ENCODE measurements at regions of chr10 and their contacts with region 1.

Region 1: GRCh38 chr10:27439101-27439500 is 65.0 kb upstream of the RAB18 start:
- DNase-seq: no peak
- ATAC-seq: no peak
- H3K4me3 ChIP-seq: no peak overlapping the region
- H3K27ac ChIP-seq: no peak overlapping the region
- H3K4me1 ChIP-seq: no peaks in the 10 kb centered on the region
- H3K27me3 ChIP-seq: no peaks in the 10 kb centered on the region
- CTCF ChIP-seq: no peak

Region 2: DNA sequence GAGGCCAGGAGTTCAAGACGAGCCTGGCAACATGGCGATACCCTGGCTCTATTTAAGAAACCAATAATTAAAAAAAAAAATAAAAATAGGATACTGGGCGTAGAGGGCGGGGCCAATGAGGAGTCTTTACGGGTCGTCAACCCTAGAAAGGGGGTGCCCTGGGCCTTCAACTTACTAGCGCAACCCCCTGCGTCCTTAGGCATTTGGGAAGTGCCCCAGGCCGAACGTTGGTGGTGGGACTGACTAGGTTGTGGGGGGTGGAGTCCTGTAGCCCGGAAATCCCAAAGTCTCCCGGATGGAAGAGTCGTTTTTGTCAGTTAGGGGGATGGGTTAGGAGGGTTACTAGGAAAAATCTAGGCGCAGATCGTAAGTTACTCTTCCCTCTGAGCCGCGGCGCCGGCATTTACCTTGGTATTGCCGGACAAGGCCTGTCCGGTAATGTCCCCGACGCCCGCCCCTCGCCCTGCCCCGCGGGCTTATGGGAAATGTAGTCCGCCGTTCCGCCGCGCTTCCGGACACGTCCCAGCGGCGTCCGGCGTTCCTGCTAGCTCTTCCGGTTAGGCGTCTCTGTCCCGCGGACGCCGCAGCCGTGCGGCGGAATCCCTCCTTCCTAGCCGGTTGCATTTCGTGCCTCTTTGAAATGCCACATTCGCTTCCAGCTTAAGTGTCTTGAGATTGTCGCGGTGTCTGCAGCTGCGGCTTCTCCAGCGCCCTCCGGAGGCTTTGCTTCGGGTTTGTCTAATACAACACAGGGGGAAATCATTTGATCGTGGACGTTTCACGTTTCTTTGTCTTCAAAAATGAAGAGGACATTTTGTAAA is 197.2 kb before region 1 on chr10:
- CTCF ChIA-PET with region 1: no interaction called
- POLR2A ChIA-PET with region 1: no interaction called
- intact Hi-C with region 1: no loop called
- DNase-seq: peak; percentile 91
- ATAC-seq: peak; percentile 64
- H3K4me3 ChIP-seq: peak overlapping the region; percentile 70
- H3K27ac ChIP-seq: peak overlapping the region; percentile 80
- H3K4me1 ChIP-seq: peaks cover 30% of the 10 kb centered on the region
- H3K27me3 ChIP-seq: no peaks in the 10 kb centered on the region
- CTCF ChIP-seq: peak; percentile 33; the same call in 1 of the 2 replicates

Region 3: GRCh38 chr10:27383595-27384542 is 55.2 kb before region 1 on chr10:
- CTCF ChIA-PET with region 1: no interaction called
- POLR2A ChIA-PET with region 1: no interaction called
- intact Hi-C with region 1: loop called (anchors 5 kb)
- DNase-seq: peak; percentile 81
- ATAC-seq: peak; percentile 99
- H3K4me3 ChIP-seq: no peak overlapping the region
- H3K27ac ChIP-seq: peak overlapping the region; percentile 53
- H3K4me1 ChIP-seq: peaks cover 16% of the 10 kb centered on the region
- H3K27me3 ChIP-seq: no peaks in the 10 kb centered on the region
- CTCF ChIP-seq: no peak

Region 4: GRCh38 chr10:27464993-27465392 is 25.9 kb after region 1 on chr10:
- CTCF ChIA-PET with region 1: no interaction called
- POLR2A ChIA-PET with region 1: no interaction called
- intact Hi-C with region 1: no loop called
- DNase-seq: no peak
- ATAC-seq: no peak
- H3K4me3 ChIP-seq: no peak overlapping the region
- H3K27ac ChIP-seq: no peak overlapping the region
- H3K4me1 ChIP-seq: no peaks in the 10 kb centered on the region
- H3K27me3 ChIP-seq: no peaks in the 10 kb centered on the region
- CTCF ChIP-seq: no peak

Region 5: GRCh38 chr10:27518261-27518660 is 79.2 kb after region 1 on chr10:
- CTCF ChIA-PET with region 1: no interaction called
- POLR2A ChIA-PET with region 1: no interaction called
- intact Hi-C with region 1: no loop called
- DNase-seq: no peak
- ATAC-seq: no peak
- H3K4me3 ChIP-seq: no peak overlapping the region
- H3K27ac ChIP-seq: no peak overlapping the region
- H3K4me1 ChIP-seq: peaks cover 17% of the 10 kb centered on the region
- H3K27me3 ChIP-seq: no peaks in the 10 kb centered on the region
- CTCF ChIP-seq: no peak